Transverse colon (tissue), 4 donors: ENCODE measurements at regions of chr5 and their contacts with region 1.

Region 1: DNA sequence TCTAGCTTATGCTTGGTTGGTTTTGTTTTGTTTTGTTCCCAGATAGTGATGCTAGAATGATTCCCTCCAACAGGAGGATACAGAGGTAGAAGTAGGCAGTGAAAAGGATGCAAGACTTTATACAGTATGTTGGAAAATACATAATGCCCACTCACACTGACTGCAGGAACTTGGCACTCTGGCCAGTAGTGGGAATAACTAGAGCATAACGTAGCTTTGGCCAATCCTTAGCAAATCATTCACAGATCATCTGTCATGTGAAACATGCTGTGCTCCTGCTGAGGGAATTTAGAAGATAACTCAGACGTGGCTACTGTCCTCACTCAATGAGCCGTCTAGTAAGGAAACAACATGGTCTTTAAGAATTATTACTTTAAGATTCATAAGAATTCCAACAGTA is 13.5 kb downstream of the CFAP90 start:
- DNase-seq: no peak
- H3K4me3 ChIP-seq: no peak overlapping the region
- H3K27ac ChIP-seq: no peak overlapping the region
- H3K4me1 ChIP-seq: no peaks in the 10 kb centered on the region
- H3K27me3 ChIP-seq: no peaks in the 10 kb centered on the region
- CTCF ChIP-seq: no peak
- EP300 ChIP-seq: no peak
- POLR2A ChIP-seq: no peak

Region 2: DNA sequence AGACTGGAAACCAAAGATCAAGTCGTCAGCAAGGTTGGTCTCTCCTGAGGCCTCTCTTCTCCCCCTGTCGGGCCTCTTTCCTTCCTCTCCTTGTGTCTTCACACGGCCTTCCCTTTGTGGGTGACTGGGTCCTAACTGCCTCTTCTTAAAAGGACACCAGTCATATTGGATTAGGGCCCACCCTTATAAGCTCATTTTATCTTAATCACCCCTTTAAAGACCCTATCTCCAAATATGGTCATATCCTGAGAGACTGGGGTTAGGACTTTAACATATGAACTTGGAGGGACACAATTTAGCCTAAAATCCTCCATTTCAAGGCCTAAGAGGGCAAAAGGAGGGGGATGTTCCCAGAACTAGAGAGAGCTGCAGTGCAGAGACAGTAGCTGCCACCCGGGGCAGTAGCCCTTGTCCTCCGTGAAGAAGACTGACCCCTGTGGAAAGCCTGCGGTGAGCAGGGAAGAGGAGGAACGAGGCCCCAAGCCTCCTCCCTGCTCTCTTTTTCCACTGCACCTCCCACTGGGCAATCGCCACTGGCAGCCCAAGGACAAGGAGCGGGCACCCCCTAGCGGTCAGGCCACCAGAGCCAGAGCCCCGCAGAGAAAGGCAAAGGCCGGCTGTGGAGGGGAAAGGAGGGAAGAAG is 21.4 kb before region 1 on chr5:
- in situ Hi-C with region 1: no loop called
- intact Hi-C with region 1: loop called (anchors 1 kb)
- DNase-seq: peak; percentile 74
- H3K4me3 ChIP-seq: no peak overlapping the region
- H3K27ac ChIP-seq: no peak overlapping the region
- H3K4me1 ChIP-seq: no peaks in the 10 kb centered on the region
- H3K27me3 ChIP-seq: no peaks in the 10 kb centered on the region
- CTCF ChIP-seq: peak; percentile 60 to 78 (median 74)
- EP300 ChIP-seq: no peak
- POLR2A ChIP-seq: no peak

Region 3: GRCh38 chr5:8270246-8270645 is 432.8 kb after region 1 on chr5:
- in situ Hi-C with region 1: no loop called
- intact Hi-C with region 1: no loop called
- DNase-seq: no peak
- H3K4me3 ChIP-seq: no peak overlapping the region
- H3K27ac ChIP-seq: no peak overlapping the region
- H3K4me1 ChIP-seq: no peaks in the 10 kb centered on the region
- H3K27me3 ChIP-seq: no peaks in the 10 kb centered on the region
- CTCF ChIP-seq: no peak
- EP300 ChIP-seq: no peak
- POLR2A ChIP-seq: no peak